ENCODE measurements at regions of chr1 and their contacts with region 1.

Region 1: GRCh38 chr1:9629445-9630201 is 21.9 kb upstream of the PIK3CD start:
- DNase-seq: peak in 1 of 2 donors; percentile 18
- H3K4me3 ChIP-seq: no peak overlapping the region
- H3K27ac ChIP-seq: no peak overlapping the region
- H3K4me1 ChIP-seq: no peaks in the 10 kb centered on the region
- H3K27me3 ChIP-seq: no peaks in the 10 kb centered on the region
- CTCF ChIP-seq: no peak
- POLR2A ChIP-seq: no peak

Region 2: DNA sequence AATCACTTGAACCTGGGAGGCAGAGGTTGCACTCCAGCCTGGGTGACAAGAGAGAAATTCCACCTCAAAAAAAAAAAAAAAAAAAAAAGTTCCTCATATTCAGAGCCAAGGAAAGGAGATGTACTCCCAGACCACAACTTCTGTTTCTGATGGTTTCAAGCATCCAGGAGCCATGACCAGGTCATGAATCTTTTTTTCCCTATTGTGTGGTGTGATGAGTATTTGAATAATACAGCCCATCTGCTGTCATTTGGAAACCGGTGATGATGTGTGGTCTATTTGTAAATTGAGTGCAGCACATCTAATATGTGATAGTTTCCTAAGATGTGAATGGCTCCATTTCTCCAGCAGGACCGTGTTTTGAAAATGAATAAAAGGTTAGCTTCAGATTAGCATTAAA is 40.5 kb after region 1 on chr1:
- intact Hi-C with region 1: no loop called
- DNase-seq: no peak
- H3K4me3 ChIP-seq: no peak overlapping the region
- H3K27ac ChIP-seq: no peak overlapping the region
- H3K4me1 ChIP-seq: no peaks in the 10 kb centered on the region
- H3K27me3 ChIP-seq: no peaks in the 10 kb centered on the region
- CTCF ChIP-seq: no peak
- POLR2A ChIP-seq: no peak

Region 3: GRCh38 chr1:9717193-9718005 is 87.8 kb after region 1 on chr1:
- intact Hi-C with region 1: loop called (anchors 5 kb)
- DNase-seq: peak; percentile 54 to 56
- H3K4me3 ChIP-seq: no peak overlapping the region
- H3K27ac ChIP-seq: peak overlapping the region in 1 of 3 donors; percentile 12
- H3K4me1 ChIP-seq: no peaks in the 10 kb centered on the region
- H3K27me3 ChIP-seq: no peaks in the 10 kb centered on the region
- CTCF ChIP-seq: no peak
- POLR2A ChIP-seq: no peak

Region 4: DNA sequence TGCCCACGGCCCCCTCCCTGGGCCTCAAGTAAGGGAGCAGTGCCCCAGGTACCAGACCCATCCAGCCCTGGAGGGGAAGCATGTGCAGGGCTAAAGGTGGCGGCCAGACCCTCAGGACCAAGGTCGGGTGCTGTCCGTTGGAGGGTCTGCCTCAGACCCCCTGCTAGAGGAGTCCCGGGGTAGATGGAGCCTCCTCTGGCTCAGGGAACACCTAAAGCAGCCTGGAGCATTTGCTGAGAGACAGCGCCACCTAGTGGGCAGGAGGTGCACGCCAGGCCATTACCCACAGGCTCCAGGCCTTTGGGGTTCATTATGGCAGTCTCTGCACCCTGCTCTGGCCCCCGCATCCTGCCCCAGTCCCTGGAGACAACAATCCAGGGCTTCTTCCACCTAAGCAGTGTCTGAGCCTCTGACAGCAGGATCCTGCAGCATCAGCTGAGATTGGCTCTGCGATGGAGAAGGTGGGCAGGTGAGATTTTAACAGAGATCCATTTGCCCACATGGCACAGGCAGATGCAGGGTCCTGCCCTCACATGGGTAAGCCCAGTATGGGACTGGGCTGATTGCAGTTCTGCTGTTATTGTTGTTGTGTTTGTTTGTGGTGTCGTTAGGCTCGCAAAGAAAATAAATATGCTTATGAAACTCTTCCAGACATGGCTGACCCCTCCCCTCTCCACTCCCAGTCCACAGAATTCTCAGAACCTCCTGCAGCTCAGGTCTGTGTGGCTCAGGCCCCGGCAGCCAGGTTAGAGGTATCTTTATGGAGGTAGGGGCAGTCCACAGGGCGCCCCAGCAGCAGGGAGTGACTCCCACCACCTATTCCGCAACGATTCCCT is 238.0 kb after region 1 on chr1:
- intact Hi-C with region 1: loop called (anchors 2 kb)
- DNase-seq: peak; percentile 75 to 81
- H3K4me3 ChIP-seq: no peak overlapping the region
- H3K27ac ChIP-seq: no peak overlapping the region
- H3K4me1 ChIP-seq: no peaks in the 10 kb centered on the region
- H3K27me3 ChIP-seq: no peaks in the 10 kb centered on the region
- CTCF ChIP-seq: peak; percentile 92 to 98 (median 96)
- POLR2A ChIP-seq: no peak

Region 5: GRCh38 chr1:9881838-9882249 is 252.2 kb after region 1 on chr1:
- intact Hi-C with region 1: no loop called
- DNase-seq: no peak
- H3K4me3 ChIP-seq: no peak overlapping the region
- H3K27ac ChIP-seq: no peak overlapping the region
- H3K4me1 ChIP-seq: no peaks in the 10 kb centered on the region
- H3K27me3 ChIP-seq: no peaks in the 10 kb centered on the region
- CTCF ChIP-seq: no peak
- POLR2A ChIP-seq: no peak

Measured in thyroid gland (tissue), 4 donors.